Mammary epithelial cell (primary cell): ENCODE measurements at regions of chr13 and their contacts with region 1.

Region 1: DNA sequence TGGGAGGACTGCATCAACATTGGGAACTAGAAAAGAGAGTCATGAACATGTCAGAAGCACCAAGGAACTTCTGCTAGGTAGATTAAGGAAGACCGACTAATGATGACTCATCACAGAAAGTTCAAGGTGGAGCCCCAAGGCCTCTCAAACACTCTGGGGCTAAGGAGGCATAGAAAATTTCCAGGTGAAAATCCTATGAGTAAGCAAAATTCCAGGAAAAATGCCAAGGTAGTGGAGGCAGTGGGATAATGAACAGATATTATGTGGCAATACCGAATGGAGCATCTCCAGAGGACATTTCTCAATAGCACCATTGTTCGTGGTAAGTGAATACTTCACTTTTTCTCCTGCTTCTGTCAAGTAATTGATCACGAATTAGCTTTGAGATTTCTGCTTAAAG is 336.5 kb downstream of the MZT1 start:
- DNase-seq: peak; percentile 97
- H3K4me3 ChIP-seq: no peak overlapping the region
- H3K27ac ChIP-seq: no peak overlapping the region
- H3K4me1 ChIP-seq: peaks cover 10% of the 10 kb centered on the region
- H3K27me3 ChIP-seq: no peaks in the 10 kb centered on the region
- CTCF ChIP-seq: no peak

Region 2: DNA sequence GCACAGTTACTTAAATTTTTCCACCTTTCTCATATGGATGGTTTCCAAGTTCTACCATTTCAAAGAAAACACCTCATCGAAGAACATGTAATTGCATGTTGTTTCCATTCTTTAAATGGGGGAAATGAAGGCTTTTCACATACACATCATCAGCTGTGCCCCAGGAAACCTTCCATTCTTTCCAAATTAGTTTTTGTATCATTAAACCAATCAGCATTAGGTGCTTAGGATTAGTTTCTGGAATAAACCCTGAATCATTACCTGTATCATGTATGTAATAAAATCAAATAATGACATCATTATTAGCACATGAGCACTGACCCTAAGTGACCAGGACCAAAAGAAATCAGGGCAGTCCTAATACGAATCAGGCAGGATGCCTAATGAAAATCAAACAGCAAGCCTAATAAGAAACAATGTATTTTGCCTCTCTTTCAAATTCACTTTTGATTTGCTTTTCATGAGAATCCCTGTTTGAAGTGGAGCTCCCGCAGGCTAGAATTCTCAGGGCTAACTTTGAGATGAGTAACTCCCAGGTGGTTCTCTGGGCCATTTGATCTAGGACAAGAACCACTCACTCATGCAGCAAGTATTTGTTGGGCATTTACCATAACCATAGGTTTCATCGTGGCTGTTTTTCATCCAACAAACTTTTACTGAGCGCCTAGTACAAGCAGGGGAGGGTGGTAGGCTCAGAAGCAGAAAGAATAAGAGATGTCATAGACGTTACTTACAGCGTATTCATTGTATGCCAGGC is 247.3 kb after region 1 on chr13:
- CTCF ChIA-PET with region 1: no interaction called
- dilution Hi-C with region 1: no loop called
- in situ Hi-C with region 1: no loop called
- intact Hi-C with region 1: loop called (anchors 10 kb)
- DNase-seq: peak; percentile 92
- H3K4me3 ChIP-seq: peak overlapping the region in 1 of 3 experiments; percentile 14
- H3K27ac ChIP-seq: peak overlapping the region; percentile 98
- H3K4me1 ChIP-seq: peaks cover 23% of the 10 kb centered on the region
- H3K27me3 ChIP-seq: no peaks in the 10 kb centered on the region
- CTCF ChIP-seq: no peak